ENCODE measurements at regions of chr12 and their contacts with region 1.

Region 1: DNA sequence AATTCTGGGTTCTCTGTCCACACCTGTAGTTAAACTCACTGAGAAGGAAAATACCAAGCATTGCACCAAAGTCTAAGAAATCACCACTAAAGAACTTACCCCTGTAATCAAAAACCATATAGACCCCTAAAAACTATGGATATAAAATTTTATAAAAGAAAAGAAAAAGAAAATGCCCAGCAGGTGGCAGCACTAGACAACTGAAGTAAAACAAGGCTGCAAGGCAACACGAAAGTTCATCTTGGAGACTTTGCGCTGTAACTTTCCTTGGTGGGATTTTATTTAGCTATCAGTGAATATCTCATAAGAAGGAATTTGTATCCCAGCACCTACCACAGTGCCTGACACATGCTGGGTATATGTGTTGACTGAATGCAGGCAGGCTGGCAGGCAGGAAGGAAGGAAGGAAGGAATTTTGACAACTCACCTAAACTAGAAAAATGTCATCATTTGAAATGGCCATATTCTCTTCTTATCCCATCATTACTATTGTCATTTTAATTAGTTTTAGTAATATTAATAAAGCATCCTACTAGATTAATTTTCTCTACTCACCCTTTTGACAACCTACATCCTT is 68.2 kb upstream of the ETV6 start:
- DNase-seq: peak; percentile 83
- ATAC-seq: no peak
- H3K4me3 Mint-ChIP-seq: no peak overlapping the region
- H3K27ac Mint-ChIP-seq: no peak overlapping the region
- H3K4me1 Mint-ChIP-seq: peaks cover 19% of the 10 kb centered on the region
- H3K27me3 Mint-ChIP-seq: peaks cover 5% of the 10 kb centered on the region

Region 2: GRCh38 chr12:11545484-11546330 is 35.6 kb before region 1 on chr12:
- CTCF ChIA-PET with region 1: interaction called, 11 read pairs
- POLR2A ChIA-PET with region 1: no interaction called
- intact Hi-C with region 1: no loop called
- DNase-seq: peak; percentile 67
- ATAC-seq: peak; percentile 82
- H3K4me3 Mint-ChIP-seq: peak overlapping the region; percentile 53
- H3K27ac Mint-ChIP-seq: peak overlapping the region; percentile 92
- H3K4me1 Mint-ChIP-seq: peaks cover 59% of the 10 kb centered on the region
- H3K27me3 Mint-ChIP-seq: no peaks in the 10 kb centered on the region

Region 3: DNA sequence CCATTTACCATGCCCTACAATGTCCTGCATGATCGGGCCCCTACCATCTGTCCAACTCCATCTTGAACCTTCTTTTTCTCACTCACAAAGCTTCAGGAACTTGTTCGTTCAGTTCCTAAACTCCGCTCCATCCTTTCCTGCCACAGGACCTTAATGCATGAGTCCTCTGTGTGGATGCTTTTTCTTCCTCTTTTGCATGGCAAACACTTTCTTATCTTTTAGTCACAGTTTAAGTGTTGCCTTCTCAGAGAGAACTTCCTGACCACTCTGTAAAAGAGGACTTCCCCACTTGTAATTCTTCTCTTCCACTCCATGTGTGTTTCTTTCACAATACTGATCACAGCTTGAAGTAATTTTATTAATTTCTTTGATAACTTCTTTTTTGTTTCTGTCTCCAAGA is 13.8 kb after region 1 on chr12:
- CTCF ChIA-PET with region 1: interaction called, 10 read pairs
- POLR2A ChIA-PET with region 1: no interaction called
- intact Hi-C with region 1: no loop called
- DNase-seq: no peak
- ATAC-seq: no peak
- H3K4me3 Mint-ChIP-seq: no peak overlapping the region
- H3K27ac Mint-ChIP-seq: no peak overlapping the region
- H3K4me1 Mint-ChIP-seq: no peaks in the 10 kb centered on the region
- H3K27me3 Mint-ChIP-seq: peaks cover 4% of the 10 kb centered on the region

Region 4: GRCh38 chr12:11771356-11771755 is 190.1 kb after region 1 on chr12:
- CTCF ChIA-PET with region 1: interaction called, 4 read pairs
- POLR2A ChIA-PET with region 1: no interaction called
- intact Hi-C with region 1: loop called (anchors 5 kb)
- DNase-seq: peak; percentile 48
- ATAC-seq: peak; percentile 45
- H3K4me3 Mint-ChIP-seq: no peak overlapping the region
- H3K27ac Mint-ChIP-seq: peak overlapping the region; percentile 79
- H3K4me1 Mint-ChIP-seq: peaks cover 94% of the 10 kb centered on the region
- H3K27me3 Mint-ChIP-seq: no peaks in the 10 kb centered on the region

Region 5: DNA sequence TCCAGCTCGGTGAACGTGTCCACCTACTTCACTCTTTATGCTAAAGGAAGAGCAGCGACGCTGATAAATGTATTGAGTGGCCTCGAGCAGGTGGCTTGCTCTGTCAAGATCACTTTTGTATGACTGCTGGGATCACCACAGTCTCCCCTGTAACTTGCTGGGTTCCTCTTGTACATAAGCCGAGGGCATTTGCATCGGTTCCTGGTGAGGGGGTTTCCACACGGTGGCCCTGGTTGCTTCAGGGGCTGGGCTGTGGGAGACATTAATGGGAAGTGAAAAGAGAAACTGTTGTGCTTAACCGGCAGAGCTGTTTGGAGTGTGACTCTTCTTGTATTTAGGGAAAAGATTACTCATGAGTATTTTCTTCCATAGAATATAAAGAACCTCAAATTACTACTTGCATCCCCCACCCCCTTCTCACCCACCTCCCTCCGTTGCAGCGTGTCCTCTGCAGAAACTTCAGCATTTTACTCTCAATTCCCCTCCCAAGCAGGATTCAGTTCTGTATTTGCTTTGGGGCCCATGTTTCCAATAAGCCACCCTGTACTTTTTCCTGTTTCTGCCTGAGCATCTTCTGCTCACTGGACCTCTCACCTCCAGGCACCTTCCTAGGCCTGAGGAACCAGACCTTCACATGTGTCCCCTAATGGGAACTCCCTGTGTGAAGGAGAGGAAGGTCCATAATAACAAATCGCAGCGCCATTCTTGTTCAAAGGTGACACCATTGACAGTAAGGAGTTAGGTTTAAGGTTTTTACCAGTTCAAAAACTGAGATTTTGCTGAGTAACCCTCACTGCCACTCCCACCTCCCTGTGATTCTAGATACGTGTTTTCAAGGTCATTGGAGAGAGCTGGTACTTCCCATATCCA is 255.2 kb after region 1 on chr12:
- CTCF ChIA-PET with region 1: interaction called, 3 read pairs
- POLR2A ChIA-PET with region 1: no interaction called
- intact Hi-C with region 1: loop called in 1 of 2 experiments (anchors 5 kb)
- DNase-seq: peak; percentile 88
- ATAC-seq: peak; percentile 86
- H3K4me3 Mint-ChIP-seq: peak overlapping the region; percentile 45
- H3K27ac Mint-ChIP-seq: peak overlapping the region; percentile 95
- H3K4me1 Mint-ChIP-seq: peaks cover 77% of the 10 kb centered on the region
- H3K27me3 Mint-ChIP-seq: no peaks in the 10 kb centered on the region

Region 6: GRCh38 chr12:11981121-11981733 is 400.0 kb after region 1 on chr12:
- CTCF ChIA-PET with region 1: interaction called, 5 read pairs
- POLR2A ChIA-PET with region 1: no interaction called
- intact Hi-C with region 1: loop called in 1 of 2 experiments (anchors 1 kb)
- DNase-seq: peak; percentile 70
- ATAC-seq: peak; percentile 87
- H3K4me3 Mint-ChIP-seq: peak overlapping the region; percentile 26
- H3K27ac Mint-ChIP-seq: peak overlapping the region; percentile 99
- H3K4me1 Mint-ChIP-seq: peaks cover 58% of the 10 kb centered on the region
- H3K27me3 Mint-ChIP-seq: no peaks in the 10 kb centered on the region

Region 7: DNA sequence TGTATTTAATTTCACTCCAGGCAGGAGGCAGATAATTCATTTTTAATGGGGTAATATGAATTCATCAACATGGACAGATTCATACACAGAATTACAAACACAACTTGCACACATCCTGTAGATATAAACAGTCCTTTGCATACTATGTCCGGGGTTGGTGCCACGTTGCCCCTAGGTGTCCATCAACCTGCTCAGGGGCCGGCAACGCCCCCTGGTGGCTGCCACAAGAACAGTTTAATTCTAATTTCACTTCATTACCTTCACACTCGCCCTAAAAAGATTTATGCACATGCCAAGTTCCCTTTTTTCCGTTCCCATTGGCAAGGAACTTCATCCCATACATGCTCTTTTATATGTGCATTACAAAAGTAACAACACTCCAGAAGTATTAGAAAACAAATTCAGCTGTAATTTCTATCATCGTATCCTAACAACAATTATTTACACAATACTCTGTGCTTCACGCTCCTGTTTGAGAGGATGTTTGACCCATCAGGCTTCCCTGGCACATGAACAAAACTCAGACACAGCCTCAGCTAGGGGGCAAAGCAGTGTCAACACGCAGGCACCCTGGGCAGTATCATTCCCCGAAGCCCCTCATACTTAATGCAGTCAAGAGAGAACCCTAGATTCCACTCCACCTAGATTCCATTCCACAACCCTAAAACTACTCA is 753.2 kb after region 1 on chr12:
- CTCF ChIA-PET with region 1: interaction called, 3 read pairs
- POLR2A ChIA-PET with region 1: no interaction called
- intact Hi-C with region 1: loop called (anchors 2 kb)
- DNase-seq: peak; percentile 82
- ATAC-seq: peak; percentile 87
- H3K4me3 Mint-ChIP-seq: no peak overlapping the region
- H3K27ac Mint-ChIP-seq: no peak overlapping the region
- H3K4me1 Mint-ChIP-seq: peaks cover 30% of the 10 kb centered on the region
- H3K27me3 Mint-ChIP-seq: no peaks in the 10 kb centered on the region